Activated CD4-positive, alpha-beta memory T cell treated with anti-CD3 and anti-CD28 coated beads for 36 hours (primary cell): ENCODE measurements at regions of chr7 and their contacts with region 1.

Region 1: DNA sequence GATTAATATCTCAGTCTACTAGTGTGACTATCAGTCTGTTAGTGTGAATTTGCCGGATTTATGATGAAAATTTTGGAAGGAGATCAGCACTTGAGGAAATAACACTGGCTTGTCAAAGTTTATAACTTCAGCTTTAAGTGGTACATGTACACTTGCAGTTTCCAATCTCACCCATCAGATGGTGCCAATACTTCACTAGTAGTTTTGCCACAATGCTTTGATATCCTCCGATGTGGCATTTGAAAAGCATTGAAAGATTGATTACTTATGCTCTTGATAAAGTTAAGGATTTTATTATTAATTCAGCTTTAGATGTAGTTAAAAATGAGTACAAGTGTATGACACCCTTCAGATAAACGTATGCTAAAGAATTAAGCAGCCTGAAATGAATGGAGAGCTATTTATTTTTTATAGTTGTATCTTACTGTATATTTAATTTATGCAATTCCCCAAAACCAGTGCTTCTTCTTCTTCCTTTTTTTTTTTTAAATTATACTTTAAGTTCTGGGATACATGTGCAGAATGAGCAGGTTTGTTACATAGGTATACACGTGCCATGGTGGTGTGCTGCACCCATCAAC is 98.2 kb downstream of the ANLN start:
- DNase-seq: no peak
- H3K4me3 Mint-ChIP-seq: no peak overlapping the region
- H3K27ac Mint-ChIP-seq: no peak overlapping the region
- H3K4me1 Mint-ChIP-seq: peaks cover 2% of the 10 kb centered on the region
- H3K27me3 Mint-ChIP-seq: peaks cover 2% of the 10 kb centered on the region

Region 2: DNA sequence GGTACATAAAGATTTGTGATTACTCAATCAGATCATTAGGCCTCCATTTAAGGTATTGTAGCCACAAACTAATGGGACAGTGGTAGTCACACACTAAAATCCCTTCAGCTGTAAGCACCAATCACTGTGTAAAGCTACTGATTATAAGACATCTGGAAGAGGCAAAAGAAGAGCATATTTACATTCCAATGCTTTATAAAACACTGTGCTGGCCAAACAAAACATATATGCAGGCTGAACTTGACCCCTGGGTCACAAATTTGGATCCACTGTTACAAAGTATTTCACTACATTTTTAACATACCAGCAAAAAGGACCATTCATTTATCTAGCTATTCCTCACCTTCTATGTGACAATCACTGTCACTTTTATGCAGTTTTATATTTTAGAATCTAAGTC is 139.6 kb before region 1 on chr7:
- CTCF ChIA-PET with region 1: no interaction called
- POLR2A ChIA-PET with region 1: no interaction called
- intact Hi-C with region 1: no loop called
- DNase-seq: no peak
- H3K4me3 Mint-ChIP-seq: no peak overlapping the region
- H3K27ac Mint-ChIP-seq: no peak overlapping the region
- H3K4me1 Mint-ChIP-seq: no peaks in the 10 kb centered on the region
- H3K27me3 Mint-ChIP-seq: peaks cover 3% of the 10 kb centered on the region

Region 3: DNA sequence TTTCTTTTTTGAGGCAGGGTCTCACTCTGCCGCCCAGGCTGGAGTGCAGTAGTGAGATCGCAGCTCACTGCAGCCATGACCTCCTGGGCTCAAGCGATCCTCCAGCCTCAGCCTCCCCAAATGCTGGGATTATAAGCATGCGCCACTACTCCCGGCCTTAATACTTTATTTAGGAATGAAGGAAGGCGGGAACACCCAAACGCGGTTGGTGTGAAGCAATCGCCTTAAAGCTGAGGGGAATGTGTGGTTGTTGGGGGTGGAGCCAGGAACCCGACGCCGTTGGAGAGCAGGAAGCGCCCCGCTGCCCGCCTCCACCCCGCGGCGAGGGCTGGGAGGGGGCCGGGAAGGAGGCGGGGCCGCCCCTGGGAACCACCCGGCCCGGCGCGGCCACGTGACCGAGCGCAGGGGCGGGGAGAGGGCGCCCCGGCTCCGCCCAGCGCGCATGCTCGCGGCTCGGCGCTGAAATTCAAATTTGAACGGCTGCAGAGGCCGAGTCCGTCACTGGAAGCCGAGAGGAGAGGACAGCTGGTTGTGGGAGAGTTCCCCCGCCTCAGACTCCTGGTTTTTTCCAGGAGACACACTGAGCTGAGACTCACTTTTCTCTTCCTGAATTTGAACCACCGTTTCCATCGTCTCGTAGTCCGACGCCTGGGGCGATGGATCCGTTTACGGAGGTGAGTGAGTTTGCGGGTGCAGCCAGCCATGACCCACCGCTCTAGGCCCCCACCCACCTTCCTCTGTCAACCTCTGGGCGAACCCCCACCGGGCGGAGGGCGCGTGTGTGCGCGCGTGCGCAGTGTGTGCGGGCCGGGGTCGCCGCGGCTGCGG is 98.3 kb before region 1 on chr7 and contains the start of gene ANLN:
- CTCF ChIA-PET with region 1: no interaction called
- POLR2A ChIA-PET with region 1: no interaction called
- intact Hi-C with region 1: no loop called
- DNase-seq: peak; percentile 91
- H3K4me3 Mint-ChIP-seq: peak within 1 kb of the TSS; percentile 93
- H3K27ac Mint-ChIP-seq: peak within 1 kb of the TSS; percentile 88
- H3K4me1 Mint-ChIP-seq: peaks cover 24% of the 10 kb centered on the region
- H3K27me3 Mint-ChIP-seq: no peaks in the 10 kb centered on the region
- total RNA-seq, gene ANLN: 46.6 to 54.7 TPM

Region 4: GRCh38 chr7:36563706-36564327 is 76.0 kb after region 1 on chr7:
- CTCF ChIA-PET with region 1: no interaction called
- POLR2A ChIA-PET with region 1: no interaction called
- intact Hi-C with region 1: loop called (anchors 2 kb)
- DNase-seq: no peak
- H3K4me3 Mint-ChIP-seq: no peak overlapping the region
- H3K27ac Mint-ChIP-seq: no peak overlapping the region
- H3K4me1 Mint-ChIP-seq: no peaks in the 10 kb centered on the region
- H3K27me3 Mint-ChIP-seq: no peaks in the 10 kb centered on the region

Region 5: GRCh38 chr7:36600869-36601530 is 113.2 kb after region 1 on chr7:
- CTCF ChIA-PET with region 1: interaction called, 3 read pairs
- POLR2A ChIA-PET with region 1: no interaction called
- intact Hi-C with region 1: loop called (anchors 1 kb)
- DNase-seq: peak; percentile 40
- H3K4me3 Mint-ChIP-seq: no peak overlapping the region
- H3K27ac Mint-ChIP-seq: no peak overlapping the region
- H3K4me1 Mint-ChIP-seq: peaks cover 53% of the 10 kb centered on the region
- H3K27me3 Mint-ChIP-seq: no peaks in the 10 kb centered on the region

Region 6: DNA sequence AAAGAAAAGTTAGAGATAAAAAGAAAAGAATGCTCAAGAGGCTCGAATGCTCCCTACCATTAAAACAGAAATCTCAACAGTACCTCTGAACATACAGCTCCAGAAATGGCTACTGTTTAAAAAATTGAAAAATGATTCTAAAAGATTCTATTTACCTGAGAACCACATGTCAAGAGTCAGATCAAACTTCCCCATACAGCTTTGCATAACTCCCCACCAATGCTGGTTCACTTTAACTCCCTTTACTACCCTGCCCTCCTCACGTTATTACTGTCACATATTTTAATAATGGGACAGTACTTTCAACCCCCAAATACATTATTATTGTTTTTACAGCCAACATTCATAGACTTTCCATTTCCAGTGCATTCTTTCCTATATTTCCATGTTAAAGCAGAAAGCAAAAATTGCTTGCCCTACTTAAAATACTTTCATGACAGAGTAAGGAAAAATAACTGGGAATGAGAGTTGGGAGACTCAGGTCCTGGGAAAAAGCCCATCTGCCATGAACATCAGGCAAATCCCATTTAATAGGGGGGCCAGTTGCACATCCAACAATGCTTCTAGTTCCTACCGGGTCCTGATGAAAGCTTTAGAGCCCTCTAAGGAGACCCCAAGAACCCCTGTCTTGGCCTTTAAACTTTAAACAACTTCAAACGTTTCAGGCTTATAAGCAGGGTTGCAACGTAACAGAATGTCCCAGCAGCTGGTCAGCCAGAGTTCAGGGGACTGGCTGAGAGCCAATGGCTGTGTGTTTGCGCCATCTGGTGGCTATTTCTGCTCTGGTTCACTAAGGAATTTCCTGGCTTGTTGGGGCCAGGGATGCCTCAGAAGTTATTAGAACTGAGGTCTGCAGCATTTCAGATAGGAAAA is 713.4 kb after region 1 on chr7:
- CTCF ChIA-PET with region 1: interaction called, 18 read pairs
- POLR2A ChIA-PET with region 1: no interaction called
- intact Hi-C with region 1: loop called (anchors 5 kb)
- DNase-seq: peak; percentile 62
- H3K4me3 Mint-ChIP-seq: no peak overlapping the region
- H3K27ac Mint-ChIP-seq: no peak overlapping the region
- H3K4me1 Mint-ChIP-seq: peaks cover 11% of the 10 kb centered on the region
- H3K27me3 Mint-ChIP-seq: no peaks in the 10 kb centered on the region